Adrenal gland (tissue), 19 donors: ENCODE measurements at regions of chr3 and their contacts with region 1.

Region 1: GRCh38 chr3:32467333-32468070 is 35.1 kb downstream of the CMTM6 start:
- DNase-seq: peak; percentile 42 to 80 (median 71)
- H3K4me3 ChIP-seq: peak overlapping the region in 2 of 4 donors; percentile 7 to 52
- H3K27ac ChIP-seq: no peak overlapping the region
- H3K4me1 ChIP-seq: peaks cover 0 to 15% of the 10 kb centered on the region in 2 donors
- H3K27me3 ChIP-seq: no peaks in the 10 kb centered on the region
- CTCF ChIP-seq: peak; percentile 79 to 99 (median 94)
- POLR2A ChIP-seq: no peak

Region 2: GRCh38 chr3:32177702-32178198 is 289.8 kb before region 1 on chr3:
- intact Hi-C with region 1: loop called in 1 of 2 experiments (anchors 10 kb)
- DNase-seq: peak; percentile 62 to 91 (median 84)
- H3K4me3 ChIP-seq: no peak overlapping the region
- H3K27ac ChIP-seq: peak overlapping the region in 1 of 5 donors; percentile 30
- H3K4me1 ChIP-seq: no peaks in the 10 kb centered on the region
- H3K27me3 ChIP-seq: no peaks in the 10 kb centered on the region
- CTCF ChIP-seq: peak; percentile 68 to 96 (median 88)
- POLR2A ChIP-seq: no peak

Region 3: DNA sequence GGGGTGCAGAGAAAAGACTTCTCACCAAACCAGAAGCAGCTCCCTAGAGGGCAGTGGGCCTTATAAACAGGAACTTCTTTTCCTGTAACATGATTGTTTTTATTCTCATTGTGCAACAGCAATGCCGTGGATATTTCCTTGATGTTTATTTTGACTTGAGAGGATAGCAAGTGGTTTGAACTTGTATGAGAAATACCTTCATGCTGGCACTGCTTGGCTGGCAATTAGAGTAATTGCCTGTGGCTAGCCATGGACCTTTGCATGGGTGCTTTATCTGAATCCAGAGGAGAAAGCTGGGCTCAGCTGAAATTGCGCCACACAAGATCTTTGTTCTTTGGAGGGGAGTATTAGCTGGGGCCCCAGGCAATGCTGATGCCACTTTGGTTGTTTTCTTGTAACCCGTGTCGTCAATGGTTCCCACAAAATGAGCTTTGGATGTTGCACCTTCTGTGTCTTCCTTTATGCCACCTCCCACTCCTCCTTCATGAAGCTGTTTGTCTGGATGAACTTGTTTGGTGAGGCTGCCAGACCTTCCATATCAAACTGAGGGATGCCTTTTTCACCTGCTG is 191.1 kb before region 1 on chr3:
- intact Hi-C with region 1: no loop called
- DNase-seq: no peak
- H3K4me3 ChIP-seq: no peak overlapping the region
- H3K27ac ChIP-seq: no peak overlapping the region
- H3K4me1 ChIP-seq: peaks cover 0 to 6% of the 10 kb centered on the region in 2 donors
- H3K27me3 ChIP-seq: no peaks in the 10 kb centered on the region
- CTCF ChIP-seq: no peak
- POLR2A ChIP-seq: no peak

Region 4: GRCh38 chr3:32374788-32375595 is 92.5 kb before region 1 on chr3:
- intact Hi-C with region 1: loop called in 1 of 2 experiments (anchors 2 kb)
- DNase-seq: peak; percentile 38 to 83 (median 70)
- H3K4me3 ChIP-seq: no peak overlapping the region
- H3K27ac ChIP-seq: no peak overlapping the region
- H3K4me1 ChIP-seq: no peaks in the 10 kb centered on the region
- H3K27me3 ChIP-seq: no peaks in the 10 kb centered on the region
- CTCF ChIP-seq: peak; percentile 66 to 79 (median 72)
- POLR2A ChIP-seq: no peak